SK-N-SH (cell line): ENCODE measurements at regions of chr1 and their contacts with region 1.

Region 1: GRCh38 chr1:204128964-204129896 is 22.6 kb downstream of the ETNK2 start:
- DNase-seq: peak; percentile 93
- H3K4me3 ChIP-seq: peak overlapping the region; percentile 4 to 39; a peak in 2 of 4 replicates
- H3K27ac ChIP-seq: peak overlapping the region in 1 of 2 experiments; percentile 93; a peak in 2 of 4 replicates
- H3K4me1 ChIP-seq: peaks cover 33 to 59% of the 10 kb centered on the region in 2 experiments
- H3K27me3 ChIP-seq: no peaks in the 10 kb centered on the region
- CTCF ChIP-seq: peak; percentile 83
- EP300 ChIP-seq: no peak
- RAD21 ChIP-seq: peak; percentile 73

Region 2: GRCh38 chr1:203861379-203862184 is 267.6 kb before region 1 on chr1 and contains the start of gene SNRPE:
- CTCF ChIA-PET with region 1: interaction called, 421 read pairs
- POLR2A ChIA-PET with region 1: interaction called, 21 read pairs
- DNase-seq: peak; percentile 90
- H3K4me3 ChIP-seq: peak within 1 kb of the TSS; percentile 73 to 83
- H3K27ac ChIP-seq: peak within 1 kb of the TSS; percentile 64 to 85
- H3K4me1 ChIP-seq: peaks cover 7 to 8% of the 10 kb centered on the region in 2 experiments; a peak in 3 of 4 replicates
- H3K27me3 ChIP-seq: no peaks in the 10 kb centered on the region
- CTCF ChIP-seq: peak; percentile 98
- EP300 ChIP-seq: no peak
- RAD21 ChIP-seq: peak; percentile 96
- polyA plus RNA-seq, gene SNRPE: 177 and 359 TPM in 2 replicates

Region 3: GRCh38 chr1:203880606-203881005 is 248.6 kb before region 1 on chr1:
- CTCF ChIA-PET with region 1: interaction called, 421 read pairs
- POLR2A ChIA-PET with region 1: no interaction called
- DNase-seq: no peak
- H3K4me3 ChIP-seq: no peak overlapping the region
- H3K27ac ChIP-seq: no peak overlapping the region
- H3K4me1 ChIP-seq: no peaks in the 10 kb centered on the region
- H3K27me3 ChIP-seq: no peaks in the 10 kb centered on the region
- CTCF ChIP-seq: no peak
- EP300 ChIP-seq: no peak
- RAD21 ChIP-seq: no peak

Region 4: GRCh38 chr1:204080163-204080903 is 48.9 kb before region 1 on chr1:
- CTCF ChIA-PET with region 1: interaction called, 12 read pairs
- POLR2A ChIA-PET with region 1: no interaction called
- DNase-seq: peak; percentile 47
- H3K4me3 ChIP-seq: no peak overlapping the region
- H3K27ac ChIP-seq: no peak overlapping the region
- H3K4me1 ChIP-seq: peaks cover 11 to 16% of the 10 kb centered on the region in 2 experiments; a peak in 2 of 4 replicates
- H3K27me3 ChIP-seq: no peaks in the 10 kb centered on the region
- CTCF ChIP-seq: no peak
- EP300 ChIP-seq: no peak
- RAD21 ChIP-seq: no peak

Region 5: DNA sequence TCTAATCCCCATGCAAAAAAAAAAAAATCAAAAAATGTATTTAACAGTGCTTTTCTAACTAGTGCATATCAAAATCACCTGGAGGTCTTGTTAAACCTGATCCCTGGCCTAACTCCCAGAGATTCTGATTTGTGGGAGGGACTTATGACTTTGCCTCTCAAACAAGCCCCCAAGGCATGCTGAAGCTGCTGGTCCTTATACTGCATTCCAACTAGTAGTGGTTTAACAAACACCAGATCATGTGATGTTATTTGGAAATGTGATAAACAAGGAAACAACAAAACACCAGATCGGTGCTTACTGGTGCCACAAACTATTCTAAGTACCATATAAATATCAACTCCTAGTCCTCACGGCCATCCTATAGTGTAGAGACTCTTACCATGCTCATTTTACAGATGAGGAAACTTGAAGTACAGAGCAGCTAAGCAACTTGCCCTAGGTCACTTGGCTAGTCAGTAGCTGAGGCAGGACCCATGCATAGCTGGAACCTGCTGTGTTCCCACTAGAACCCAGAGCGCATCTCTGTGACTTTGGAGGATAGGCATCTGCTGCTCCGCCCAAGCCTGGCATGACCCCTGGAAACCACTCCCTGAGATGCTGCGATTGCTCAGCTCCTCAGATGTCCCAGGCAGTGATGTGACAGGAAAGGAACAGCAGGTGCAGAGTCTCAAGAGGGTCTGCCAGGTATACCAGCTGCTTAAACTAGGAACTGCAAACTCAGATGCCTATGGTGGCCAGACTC is 18.2 kb before region 1 on chr1:
- CTCF ChIA-PET with region 1: interaction called, 20 read pairs
- POLR2A ChIA-PET with region 1: no interaction called
- DNase-seq: no peak
- H3K4me3 ChIP-seq: no peak overlapping the region
- H3K27ac ChIP-seq: no peak overlapping the region
- H3K4me1 ChIP-seq: no peaks in the 10 kb centered on the region
- H3K27me3 ChIP-seq: no peaks in the 10 kb centered on the region
- CTCF ChIP-seq: no peak
- EP300 ChIP-seq: no peak
- RAD21 ChIP-seq: no peak

Region 6: DNA sequence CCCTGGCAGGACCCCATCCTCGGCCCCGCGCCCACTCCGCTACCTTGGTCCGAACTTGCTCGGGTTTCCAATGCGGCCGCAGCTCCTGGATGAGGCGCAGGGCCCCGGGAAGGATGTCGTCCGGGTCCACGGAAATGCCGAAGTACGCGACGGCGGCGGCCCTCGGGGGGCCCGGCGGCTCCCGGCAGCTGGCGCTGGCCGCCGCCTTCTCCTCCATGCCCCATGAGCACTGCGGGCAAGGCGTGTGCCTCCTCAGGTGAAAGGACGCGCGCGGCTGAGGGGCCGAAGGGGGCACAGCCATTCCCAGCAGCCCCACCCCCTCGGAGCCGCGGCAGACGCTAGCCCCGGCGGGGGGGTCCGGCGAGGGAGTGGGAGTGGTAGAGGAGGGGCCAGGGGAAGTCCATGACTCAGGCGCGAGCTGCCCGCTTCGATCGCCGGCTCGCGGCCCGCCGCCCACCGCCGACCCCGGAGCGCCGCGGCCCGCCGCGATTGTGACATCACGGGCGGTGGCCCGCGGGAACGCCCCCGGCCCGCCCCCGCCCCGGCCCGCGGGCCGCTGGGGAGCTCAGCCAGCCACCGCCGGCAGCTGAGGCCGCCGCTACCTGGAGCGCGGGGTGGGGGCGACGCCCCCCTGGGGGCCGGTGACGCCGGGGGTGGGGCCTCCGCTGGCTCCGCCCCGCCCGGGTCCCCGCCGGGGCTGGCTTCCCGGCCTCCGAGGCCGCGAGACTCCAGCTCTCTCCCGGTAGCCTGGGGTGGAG is 22.5 kb after region 1 on chr1 and contains the start of gene ETNK2:
- CTCF ChIA-PET with region 1: interaction called, 51 read pairs
- POLR2A ChIA-PET with region 1: interaction called, 25 read pairs
- DNase-seq: peak; percentile 98
- H3K4me3 ChIP-seq: peak within 1 kb of the TSS; percentile 72 to 89
- H3K27ac ChIP-seq: peak within 1 kb of the TSS in 1 of 2 experiments; percentile 72; a peak in 1 of 4 replicates
- H3K4me1 ChIP-seq: peaks cover 3 to 19% of the 10 kb centered on the region in 2 experiments; a peak in 1 of 4 replicates
- H3K27me3 ChIP-seq: no peaks in the 10 kb centered on the region
- CTCF ChIP-seq: no peak
- EP300 ChIP-seq: no peak
- RAD21 ChIP-seq: no peak
- polyA plus RNA-seq, gene ETNK2: 16.1 and 20.1 TPM in 2 replicates

Region 7: GRCh38 chr1:204207136-204207616 is 77.9 kb after region 1 on chr1:
- CTCF ChIA-PET with region 1: no interaction called
- POLR2A ChIA-PET with region 1: no interaction called
- DNase-seq: peak; percentile 86
- H3K4me3 ChIP-seq: no peak overlapping the region; a peak in 1 of 4 replicates
- H3K27ac ChIP-seq: no peak overlapping the region
- H3K4me1 ChIP-seq: peaks cover 0 to 3% of the 10 kb centered on the region in 2 experiments; a peak in 1 of 4 replicates
- H3K27me3 ChIP-seq: peaks cover 6% of the 10 kb centered on the region; the same call in 1 of the 2 replicates
- CTCF ChIP-seq: peak; percentile 90
- EP300 ChIP-seq: no peak
- RAD21 ChIP-seq: peak; percentile 50